CD14-positive monocyte (primary cell): ENCODE measurements at regions of chr7 and their contacts with region 1.

Region 1: DNA sequence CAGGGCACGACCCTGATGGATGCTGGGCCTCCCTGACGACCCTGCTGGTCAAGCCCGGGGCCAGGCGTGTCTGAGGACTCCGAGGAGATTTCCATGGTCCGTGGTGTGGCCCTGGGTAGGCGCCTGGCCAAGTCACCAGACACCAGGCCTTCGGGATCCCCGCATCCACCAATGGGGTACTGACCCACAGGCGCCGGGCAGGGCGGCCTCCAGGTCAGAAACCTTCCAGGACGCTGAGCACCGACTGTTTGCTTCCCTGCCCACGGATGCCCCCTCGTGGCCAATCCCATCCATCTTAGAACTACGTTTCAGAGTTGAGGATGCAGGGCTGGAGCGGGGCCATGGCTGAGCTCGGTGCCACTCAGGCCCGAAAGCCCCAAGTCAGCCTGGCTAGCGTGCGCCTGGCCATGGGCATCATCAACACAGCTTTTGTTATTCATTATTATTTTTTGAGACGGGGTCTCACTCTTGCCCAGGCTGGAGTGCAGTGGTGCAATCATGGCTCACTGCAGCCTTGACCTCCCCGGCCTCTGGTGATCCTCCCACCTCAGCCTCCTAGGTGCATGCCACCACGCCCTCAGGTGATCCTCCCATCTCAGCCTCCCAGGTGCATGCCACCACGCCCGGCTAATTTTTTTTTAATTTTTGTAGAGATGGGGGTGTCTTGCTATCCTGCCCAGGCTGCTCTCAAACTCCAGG is 7.1 kb upstream of the AMZ1 start:
- DNase-seq: peak; percentile 69 to 77 (median 73)
- H3K4me3 ChIP-seq: no peak overlapping the region
- H3K4me3 Mint-ChIP-seq: no peak overlapping the region
- H3K27ac ChIP-seq: no peak overlapping the region
- H3K27ac Mint-ChIP-seq: no peak overlapping the region
- H3K4me1 ChIP-seq: peaks cover 3 to 4% of the 10 kb centered on the region in 2 donors
- H3K4me1 Mint-ChIP-seq: peaks cover 2% of the 10 kb centered on the region
- H3K27me3 ChIP-seq: peaks cover 0 to 7% of the 10 kb centered on the region in 2 donors
- H3K27me3 Mint-ChIP-seq: peaks cover 12 to 41% (median 14%) of the 10 kb centered on the region in 3 donors
- CTCF ChIP-seq: peak; percentile 81

Region 2: GRCh38 chr7:2451171-2452073 is 229.5 kb before region 1 on chr7:
- intact Hi-C with region 1: loop called (anchors 5 kb)
- DNase-seq: peak; percentile 71 to 76 (median 76)
- H3K4me3 ChIP-seq: peak overlapping the region; percentile 31 to 81 (median 56)
- H3K4me3 Mint-ChIP-seq: peak overlapping the region; percentile 76 to 92
- H3K27ac ChIP-seq: peak overlapping the region in 1 of 2 donors; percentile 65
- H3K27ac Mint-ChIP-seq: peak overlapping the region in 4 of 7 donors; percentile 31 to 74 (median 50)
- H3K4me1 ChIP-seq: peaks cover 11 to 13% of the 10 kb centered on the region in 2 donors
- H3K4me1 Mint-ChIP-seq: peaks cover 11% of the 10 kb centered on the region
- H3K27me3 ChIP-seq: no peaks in the 10 kb centered on the region
- H3K27me3 Mint-ChIP-seq: peaks cover 2 to 6% (median 2%) of the 10 kb centered on the region in 3 donors
- CTCF ChIP-seq: peak; percentile 91